PC-3 (cell line): ENCODE measurements at regions of chr5 and their contacts with region 1.

Region 1: DNA sequence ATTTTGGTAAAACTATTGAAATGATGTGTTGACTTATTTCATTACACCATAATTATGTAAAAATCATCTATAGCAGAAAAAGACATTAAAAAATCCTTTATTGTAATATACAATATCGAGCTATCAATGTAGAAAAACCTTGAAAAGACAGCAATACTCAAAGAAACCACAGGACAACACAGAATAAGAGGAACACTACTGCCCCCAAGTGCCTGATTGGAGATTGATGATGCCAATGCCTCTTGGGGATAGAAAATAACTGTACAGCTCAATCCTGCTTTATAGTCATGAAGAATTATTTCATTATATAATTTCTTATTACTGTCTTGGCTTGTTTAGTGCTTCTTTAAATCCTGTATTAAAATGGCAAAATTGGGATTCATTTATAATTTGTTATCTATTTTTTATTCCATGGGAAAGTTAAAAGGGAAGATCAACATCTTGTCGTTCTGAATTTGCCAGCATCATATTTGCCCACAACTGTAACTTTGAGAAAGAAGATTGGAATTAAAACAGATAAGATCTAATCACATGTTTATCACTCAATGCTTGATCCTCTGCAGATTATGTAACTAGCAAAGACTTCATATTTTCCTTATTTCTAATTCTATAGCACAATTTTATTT is 337.5 kb downstream of the CDH9 start:
- DNase-seq: peak; percentile 75
- ATAC-seq: peak; percentile 82
- H3K4me3 ChIP-seq: no peak overlapping the region
- H3K27ac ChIP-seq: no peak overlapping the region
- H3K4me1 ChIP-seq: no peaks in the 10 kb centered on the region
- H3K27me3 ChIP-seq: no peaks in the 10 kb centered on the region
- CTCF ChIP-seq: peak; percentile 89

Region 2: GRCh38 chr5:26482810-26483375 is 218.0 kb before region 1 on chr5:
- CTCF ChIA-PET with region 1: interaction called, 3 read pairs
- POLR2A ChIA-PET with region 1: no interaction called
- intact Hi-C with region 1: loop called (anchors 2 kb)
- DNase-seq: peak; percentile 71
- ATAC-seq: peak; percentile 100
- H3K4me3 ChIP-seq: peak overlapping the region; percentile 67
- H3K27ac ChIP-seq: no peak overlapping the region
- H3K4me1 ChIP-seq: no peaks in the 10 kb centered on the region
- H3K27me3 ChIP-seq: no peaks in the 10 kb centered on the region
- CTCF ChIP-seq: peak; percentile 90

Region 3: DNA sequence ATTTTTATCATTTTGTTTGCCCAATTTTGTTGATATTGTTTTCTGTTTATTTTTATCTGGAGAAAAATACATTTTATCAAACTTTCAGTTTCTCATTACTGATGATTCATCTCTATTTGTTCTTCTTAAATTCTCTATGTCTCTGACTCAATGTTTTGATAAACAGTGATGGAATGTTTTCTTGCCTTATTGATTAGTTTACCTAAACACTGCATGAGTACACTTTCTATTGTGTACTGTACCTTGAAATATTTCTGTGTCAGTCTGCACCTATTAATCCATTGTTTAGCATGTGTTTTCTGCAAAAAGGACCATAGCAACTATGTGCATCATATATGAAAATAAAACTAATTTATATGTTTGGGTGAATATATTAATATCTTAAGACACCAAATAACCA is 36.9 kb after region 1 on chr5:
- CTCF ChIA-PET with region 1: no interaction called
- POLR2A ChIA-PET with region 1: no interaction called
- intact Hi-C with region 1: no loop called
- DNase-seq: peak; percentile 47
- ATAC-seq: peak; percentile 56
- H3K4me3 ChIP-seq: no peak overlapping the region
- H3K27ac ChIP-seq: no peak overlapping the region
- H3K4me1 ChIP-seq: peaks cover 4% of the 10 kb centered on the region; the same call in 1 of the 2 replicates
- H3K27me3 ChIP-seq: no peaks in the 10 kb centered on the region
- CTCF ChIP-seq: no peak